Endothelial cell of umbilical vein (primary cell): ENCODE measurements at regions of chr17 and their contacts with region 1.

Region 1: GRCh38 chr17:74296548-74296936 is 22.5 kb downstream of the DNAI2 start:
- DNase-seq: peak; percentile 7
- H3K4me3 ChIP-seq: no peak overlapping the region
- H3K27ac ChIP-seq: no peak overlapping the region
- H3K4me1 ChIP-seq: no peaks in the 10 kb centered on the region
- H3K27me3 ChIP-seq: peaks cover 0 to 2% of the 10 kb centered on the region in 2 experiments
- CTCF ChIP-seq: peak; percentile 10 to 44
- POLR2A ChIP-seq: no peak

Region 2: GRCh38 chr17:74212913-74213791 is 83.4 kb before region 1 on chr17 and contains the start of gene TTYH2:
- CTCF ChIA-PET with region 1: interaction called, 12 read pairs
- POLR2A ChIA-PET with region 1: no interaction called
- dilution Hi-C with region 1: no loop called
- intact Hi-C with region 1: loop called (anchors 5 kb)
- DNase-seq: peak; percentile 73
- H3K4me3 ChIP-seq: peak within 1 kb of the TSS; percentile 41 to 76 (median 50)
- H3K27ac ChIP-seq: no peak within 1 kb of the TSS
- H3K4me1 ChIP-seq: peaks cover 17% of the 10 kb centered on the region
- H3K27me3 ChIP-seq: no peaks in the 10 kb centered on the region
- CTCF ChIP-seq: peak in 1 of 2 donors; percentile 32
- POLR2A ChIP-seq: no peak
- total RNA-seq, gene TTYH2: 0.75 and 1.1 TPM in 2 replicates

Region 3: DNA sequence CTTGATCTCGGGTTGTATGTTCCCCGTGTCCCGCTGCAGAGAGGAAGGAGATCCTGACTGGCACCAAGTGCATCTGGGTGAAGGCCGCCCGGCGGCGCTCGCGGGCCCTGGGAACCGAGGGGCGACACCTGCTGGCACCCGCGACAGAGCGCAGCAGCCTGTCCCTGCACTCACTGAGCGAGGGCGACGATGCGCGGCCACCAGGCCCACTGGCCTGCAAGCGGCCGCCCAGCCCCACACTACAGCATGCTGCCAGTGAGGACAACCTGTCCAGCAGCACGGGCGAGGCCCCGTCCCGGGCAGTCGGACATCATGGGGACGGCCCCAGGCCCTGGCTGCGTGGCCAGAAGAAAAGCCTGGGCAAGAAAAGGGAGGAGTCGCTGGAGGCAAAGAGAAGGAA is 57.6 kb after region 1 on chr17:
- CTCF ChIA-PET with region 1: interaction called, 3 read pairs
- POLR2A ChIA-PET with region 1: no interaction called
- dilution Hi-C with region 1: no loop called
- intact Hi-C with region 1: loop called (anchors 1 kb)
- DNase-seq: no peak
- H3K4me3 ChIP-seq: no peak overlapping the region
- H3K27ac ChIP-seq: no peak overlapping the region
- H3K4me1 ChIP-seq: no peaks in the 10 kb centered on the region
- H3K27me3 ChIP-seq: peaks cover 10 to 30% of the 10 kb centered on the region in 2 experiments
- CTCF ChIP-seq: peak; percentile 62 to 64
- POLR2A ChIP-seq: no peak

Region 4: DNA sequence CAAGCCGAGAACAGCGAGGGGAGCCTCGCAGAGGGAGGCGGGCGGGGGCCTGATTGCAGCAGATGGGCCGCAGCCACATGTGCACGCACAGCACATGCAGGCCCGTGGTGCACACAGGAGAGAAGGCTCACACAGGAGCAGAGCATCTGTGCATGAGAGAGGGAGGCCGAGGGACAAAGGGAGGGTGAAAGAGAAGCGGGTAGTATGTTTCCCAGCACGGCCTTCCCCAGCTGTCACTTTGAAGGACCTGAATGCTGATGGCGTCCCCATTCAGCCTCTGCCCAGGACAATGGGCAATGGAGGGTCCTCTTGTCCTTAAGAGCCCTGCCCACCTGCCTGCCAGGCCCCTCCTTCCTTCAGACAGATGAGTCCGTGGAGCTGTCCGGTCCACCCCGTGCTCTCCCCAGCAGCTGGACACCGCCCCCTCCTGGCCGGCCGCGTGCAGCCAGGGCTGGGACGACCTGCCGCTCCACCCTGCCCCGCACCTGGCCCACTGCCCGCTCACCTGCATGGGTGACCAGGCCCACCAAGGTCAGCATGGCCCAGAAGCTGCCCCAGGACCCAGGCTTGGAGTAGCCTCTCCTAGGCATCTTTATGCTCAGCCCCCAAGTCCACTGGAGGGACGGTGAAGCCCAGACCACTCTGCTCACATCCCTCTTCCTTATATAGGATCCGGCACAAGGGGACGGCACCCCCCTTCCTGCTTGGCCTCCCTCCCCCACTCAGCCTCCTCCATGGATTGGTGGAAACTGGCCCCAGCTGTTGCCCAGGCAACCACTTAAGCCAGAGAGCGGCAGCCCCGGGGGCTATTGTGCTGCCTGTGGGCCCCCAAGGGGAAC is 64.9 kb after region 1 on chr17 and contains the start of gene BTBD17:
- CTCF ChIA-PET with region 1: interaction called, 29 read pairs
- POLR2A ChIA-PET with region 1: no interaction called
- dilution Hi-C with region 1: no loop called
- intact Hi-C with region 1: loop called (anchors 1 kb)
- DNase-seq: peak; percentile 13
- H3K4me3 ChIP-seq: no peak within 1 kb of the TSS
- H3K27ac ChIP-seq: no peak within 1 kb of the TSS
- H3K4me1 ChIP-seq: no peaks in the 10 kb centered on the region
- H3K27me3 ChIP-seq: peaks cover 7 to 12% of the 10 kb centered on the region in 2 experiments
- CTCF ChIP-seq: peak; percentile 67 to 76
- POLR2A ChIP-seq: no peak
- total RNA-seq, gene BTBD17: not detected in 2 replicates